ENCODE measurements at regions of chr6 and their contacts with region 1.

Region 1: DNA sequence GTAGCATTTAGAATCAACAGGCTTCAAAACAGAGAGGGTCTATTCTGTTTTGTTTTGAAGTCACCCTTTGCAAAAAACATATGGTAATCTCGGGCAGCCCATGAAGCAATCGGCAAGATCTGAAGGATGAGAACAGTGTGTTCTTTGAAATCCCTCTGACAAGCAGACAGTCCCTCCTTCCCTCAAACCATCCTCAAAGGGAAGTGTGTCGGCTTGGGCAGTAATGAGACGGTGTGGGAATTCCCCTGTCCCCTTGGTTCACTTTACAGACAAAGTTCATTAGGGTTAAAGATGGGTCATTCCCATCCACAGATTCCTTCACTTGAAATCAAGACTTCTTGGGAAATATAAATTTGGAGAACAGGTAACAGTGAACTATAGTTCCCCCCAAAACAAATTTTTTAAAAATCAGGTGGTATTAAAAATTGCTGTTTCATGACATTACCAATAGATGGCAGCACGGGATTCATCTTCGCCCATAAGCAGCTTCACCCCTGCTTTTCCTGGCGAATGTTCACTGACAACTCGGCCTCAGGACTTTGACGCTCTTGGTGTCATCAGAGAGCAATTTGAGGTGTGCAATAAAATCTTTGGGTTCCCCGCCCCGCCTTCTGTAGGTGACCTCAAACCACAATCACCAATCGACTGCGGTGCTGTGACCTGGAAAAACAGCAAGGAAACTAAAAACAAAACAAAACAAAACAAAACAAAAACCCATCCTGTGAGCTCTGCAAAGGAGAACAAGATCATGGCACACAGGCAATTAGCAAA is 159.3 kb upstream of the TNFAIP3 start:
- DNase-seq: peak; percentile 81
- H3K4me3 ChIP-seq: no peak overlapping the region
- H3K27ac ChIP-seq: peak overlapping the region; percentile 14
- H3K4me1 ChIP-seq: peaks cover 9% of the 10 kb centered on the region
- H3K27me3 ChIP-seq: no peaks in the 10 kb centered on the region
- CTCF ChIP-seq: peak; percentile 73

Region 2: GRCh38 chr6:137791281-137792159 is 83.7 kb after region 1 on chr6:
- intact Hi-C with region 1: loop called (anchors 5 kb)
- DNase-seq: no peak
- H3K4me3 ChIP-seq: no peak overlapping the region
- H3K27ac ChIP-seq: peak overlapping the region; percentile 77
- H3K4me1 ChIP-seq: peaks cover 5% of the 10 kb centered on the region
- H3K27me3 ChIP-seq: no peaks in the 10 kb centered on the region
- CTCF ChIP-seq: no peak

Region 3: DNA sequence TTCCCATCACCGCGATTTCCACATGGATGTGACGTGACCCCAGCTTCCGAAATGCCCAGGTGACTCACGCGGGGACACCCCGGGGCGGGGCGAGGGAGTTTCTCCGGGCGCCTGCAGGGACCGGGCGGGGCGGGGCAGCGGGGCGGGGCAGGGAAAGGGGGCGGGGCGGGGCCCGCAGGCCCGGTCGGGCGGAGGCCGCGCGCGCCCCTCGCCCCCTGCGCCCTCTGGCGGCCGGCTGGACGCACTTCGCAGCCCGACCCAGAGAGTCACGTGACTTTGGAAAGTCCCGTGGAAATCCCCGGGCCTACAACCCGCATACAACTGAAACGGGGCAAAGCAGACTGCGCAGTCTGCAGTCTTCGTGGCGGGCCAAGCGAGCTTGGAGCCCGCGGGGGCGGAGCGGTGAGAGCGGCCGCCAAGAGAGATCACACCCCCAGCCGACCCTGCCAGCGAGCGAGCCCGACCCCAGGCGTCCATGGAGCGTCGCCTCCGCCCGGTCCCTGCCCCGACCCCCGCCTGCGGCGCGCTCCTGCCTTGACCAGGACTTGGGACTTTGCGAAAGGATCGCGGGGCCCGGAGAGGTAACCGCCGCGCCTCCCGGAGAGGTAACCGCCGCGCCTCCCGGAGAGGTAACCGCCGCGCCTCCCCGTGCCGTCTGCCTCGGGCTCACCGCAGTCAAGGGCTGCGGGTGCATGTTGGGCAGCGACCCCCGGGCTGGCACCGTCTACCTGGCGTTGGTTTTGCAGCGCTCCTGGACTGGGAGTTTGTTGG is 159.3 kb after region 1 on chr6 and contains the start of gene TNFAIP3:
- intact Hi-C with region 1: loop called (anchors 2 kb)
- DNase-seq: peak; percentile 95
- H3K4me3 ChIP-seq: peak within 1 kb of the TSS; percentile 91
- H3K27ac ChIP-seq: peak within 1 kb of the TSS; percentile 99
- H3K4me1 ChIP-seq: peaks cover 4% of the 10 kb centered on the region
- H3K27me3 ChIP-seq: no peaks in the 10 kb centered on the region
- CTCF ChIP-seq: peak; percentile 55
- total RNA-seq, gene TNFAIP3: 18.1 to 46.3 TPM

Region 4: GRCh38 chr6:137944793-137945498 is 237.2 kb after region 1 on chr6:
- intact Hi-C with region 1: loop called (anchors 2 kb)
- DNase-seq: no peak
- H3K4me3 ChIP-seq: no peak overlapping the region
- H3K27ac ChIP-seq: no peak overlapping the region
- H3K4me1 ChIP-seq: no peaks in the 10 kb centered on the region
- H3K27me3 ChIP-seq: no peaks in the 10 kb centered on the region
- CTCF ChIP-seq: peak; percentile 78

Region 5: GRCh38 chr6:137975188-137975940 is 267.6 kb after region 1 on chr6:
- intact Hi-C with region 1: loop called (anchors 10 kb)
- DNase-seq: no peak
- H3K4me3 ChIP-seq: no peak overlapping the region
- H3K27ac ChIP-seq: peak overlapping the region; percentile 15
- H3K4me1 ChIP-seq: no peaks in the 10 kb centered on the region
- H3K27me3 ChIP-seq: no peaks in the 10 kb centered on the region
- CTCF ChIP-seq: peak; percentile 29

Region 6: DNA sequence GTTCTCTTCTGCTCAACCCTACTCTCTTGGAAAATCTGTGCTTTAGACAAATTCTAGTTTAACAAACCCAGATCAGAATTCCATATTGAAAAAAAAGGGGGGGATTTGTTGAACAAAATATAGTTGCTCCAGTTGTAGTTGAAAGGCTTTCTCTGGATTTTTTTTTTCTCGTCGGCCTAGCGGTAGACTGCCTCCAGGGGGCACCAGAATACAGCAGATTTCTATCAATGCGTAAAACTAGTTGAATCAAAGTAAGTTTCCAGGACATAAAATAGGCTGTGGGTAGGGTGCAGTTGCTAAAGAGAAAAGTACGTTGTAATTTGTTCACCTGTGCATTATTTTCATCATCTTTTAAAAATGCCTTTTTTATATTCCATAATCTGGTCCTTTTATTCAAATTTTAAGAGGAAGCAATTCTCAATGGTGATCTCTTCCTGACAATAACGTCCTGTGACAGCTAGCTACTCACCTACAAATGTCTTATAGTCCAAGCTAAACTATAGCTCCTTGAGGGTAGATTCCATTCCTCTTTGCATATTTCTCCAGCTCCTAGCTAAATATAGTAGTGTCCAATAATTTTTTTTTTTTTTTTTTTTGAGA is 294.1 kb after region 1 on chr6:
- intact Hi-C with region 1: loop called (anchors 5 kb)
- DNase-seq: peak; percentile 78
- H3K4me3 ChIP-seq: no peak overlapping the region
- H3K27ac ChIP-seq: no peak overlapping the region
- H3K4me1 ChIP-seq: no peaks in the 10 kb centered on the region
- H3K27me3 ChIP-seq: no peaks in the 10 kb centered on the region
- CTCF ChIP-seq: peak; percentile 80

Region 7: DNA sequence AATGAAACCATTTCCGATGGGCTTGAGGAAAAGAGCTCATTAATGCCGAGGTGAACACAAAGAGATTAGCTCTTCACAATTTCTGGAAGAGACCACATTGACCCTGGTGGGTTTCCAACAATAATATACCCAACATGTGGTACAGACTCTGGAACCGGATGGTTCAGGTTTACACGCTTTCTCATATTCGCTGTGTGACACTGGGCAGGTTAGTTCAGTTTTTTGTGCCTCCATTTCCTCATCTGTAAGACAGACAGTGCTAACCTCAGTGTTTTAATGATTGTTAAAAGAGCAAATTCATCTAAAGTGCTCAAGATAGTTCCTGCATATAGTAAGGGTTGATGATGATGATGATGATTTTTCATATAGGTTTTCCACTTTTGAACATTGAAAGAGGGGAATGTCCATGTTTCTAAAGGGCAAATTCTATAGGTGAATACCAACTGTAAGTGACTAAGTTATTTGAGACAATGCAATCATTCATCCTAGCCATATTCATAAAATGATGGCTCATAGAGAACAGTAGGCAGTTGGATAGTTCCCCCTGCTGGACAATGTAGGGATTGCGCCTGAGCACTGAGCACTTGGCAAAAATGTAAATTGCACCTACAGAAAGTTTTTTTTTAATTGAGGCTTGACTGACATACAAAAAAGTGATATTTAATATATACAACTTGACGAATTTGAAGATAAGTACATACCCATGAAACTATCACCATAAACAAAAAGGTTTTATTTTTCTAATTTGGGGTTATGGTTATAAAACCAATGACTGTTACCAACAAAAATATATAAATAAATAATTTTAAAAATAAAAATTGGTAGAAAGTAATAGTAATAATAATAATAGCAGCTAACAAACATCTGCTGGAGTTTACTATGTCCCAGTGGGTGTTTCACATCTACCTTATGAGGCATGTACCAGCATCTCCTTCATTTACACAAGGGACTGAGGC is 401.5 kb after region 1 on chr6:
- intact Hi-C with region 1: loop called (anchors 10 kb)
- DNase-seq: peak; percentile 86
- H3K4me3 ChIP-seq: no peak overlapping the region
- H3K27ac ChIP-seq: no peak overlapping the region
- H3K4me1 ChIP-seq: peaks cover 9% of the 10 kb centered on the region
- H3K27me3 ChIP-seq: no peaks in the 10 kb centered on the region
- CTCF ChIP-seq: peak; percentile 99

Region 8: DNA sequence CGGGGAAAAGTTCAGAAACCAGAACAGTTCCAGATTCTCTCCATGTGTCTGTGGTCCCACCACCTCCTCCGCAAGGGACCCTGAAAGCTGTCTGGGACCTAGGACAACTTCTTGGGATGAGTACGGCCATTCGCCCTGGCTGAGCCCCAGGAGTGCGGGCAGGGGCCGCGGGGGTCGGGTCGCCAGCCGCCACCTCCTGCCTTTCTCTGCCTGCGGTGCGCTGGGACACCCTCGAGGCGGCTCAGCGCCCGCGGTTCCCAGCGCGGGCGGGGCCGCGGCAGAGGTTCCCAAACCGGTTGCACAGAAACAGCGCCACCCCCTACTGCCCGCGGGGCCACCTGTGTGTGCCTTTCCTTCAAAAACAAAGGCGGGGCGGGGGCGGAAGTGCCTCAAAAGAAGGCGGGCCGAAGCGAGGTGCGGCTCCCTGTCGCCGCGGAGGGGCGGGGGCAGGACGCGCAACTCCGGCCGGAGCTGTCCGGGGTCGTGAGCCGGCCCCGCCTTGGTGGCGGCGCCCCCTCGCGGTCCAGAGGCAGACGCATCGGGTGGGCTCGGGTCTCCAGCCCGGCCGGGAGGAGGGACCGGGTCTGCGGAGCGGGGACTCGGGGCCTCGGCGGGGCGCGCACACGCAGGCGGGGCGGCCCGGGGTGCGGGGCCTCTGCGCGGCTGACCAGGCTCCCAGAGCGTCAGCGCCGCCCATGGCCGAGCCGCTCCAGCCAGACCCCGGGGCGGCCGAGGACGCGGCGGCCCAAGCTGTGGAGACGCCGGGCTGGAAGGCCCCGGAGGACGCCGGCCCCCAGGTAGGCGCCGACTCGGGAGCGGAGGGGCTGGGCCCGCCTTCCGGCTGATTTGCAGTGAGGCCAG is 696.3 kb after region 1 on chr6 and contains the start of gene HEBP2:
- intact Hi-C with region 1: no loop called
- DNase-seq: peak; percentile 99
- H3K4me3 ChIP-seq: peak within 1 kb of the TSS; percentile 70
- H3K27ac ChIP-seq: peak within 1 kb of the TSS; percentile 86
- H3K4me1 ChIP-seq: peaks cover 4% of the 10 kb centered on the region
- H3K27me3 ChIP-seq: no peaks in the 10 kb centered on the region
- CTCF ChIP-seq: peak; percentile 36
- total RNA-seq, gene HEBP2: 82.3 to 93.6 TPM